HepG2 (cell line): ENCODE measurements at regions of chr10 and their contacts with region 1.

Region 1: DNA sequence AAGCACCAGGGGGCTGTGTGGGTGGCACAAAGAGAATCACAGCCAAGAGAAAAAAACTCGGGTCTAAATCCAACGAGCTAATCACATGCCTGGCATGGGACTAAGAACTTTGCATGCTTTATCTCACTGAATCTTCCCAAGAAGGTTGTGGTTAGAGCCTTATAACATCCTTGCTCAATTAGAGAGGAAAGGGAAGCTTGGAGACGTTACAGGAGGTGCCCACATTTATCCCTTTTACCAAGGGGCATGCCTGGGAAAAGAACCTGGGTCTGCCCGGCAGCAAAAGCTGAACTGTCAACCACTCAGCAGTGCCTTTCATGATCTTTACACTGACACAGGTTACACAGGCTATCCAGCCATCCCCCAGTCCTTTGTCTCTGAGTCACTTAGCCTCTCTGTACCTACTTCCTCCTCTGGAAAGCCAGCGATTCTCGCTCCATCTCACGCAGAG is 190.1 kb downstream of the PRPF18 start:
- DNase-seq: no peak
- ATAC-seq: no peak; the same call in 2 of the 3 replicates
- H3K4me3 ChIP-seq: no peak overlapping the region
- H3K27ac ChIP-seq: no peak overlapping the region
- H3K4me1 ChIP-seq: no peaks in the 10 kb centered on the region
- H3K27me3 ChIP-seq: no peaks in the 10 kb centered on the region
- CTCF ChIP-seq: no peak
- EP300 ChIP-seq: no peak
- POLR2A ChIP-seq: no peak
- RAD21 ChIP-seq: no peak

Region 2: DNA sequence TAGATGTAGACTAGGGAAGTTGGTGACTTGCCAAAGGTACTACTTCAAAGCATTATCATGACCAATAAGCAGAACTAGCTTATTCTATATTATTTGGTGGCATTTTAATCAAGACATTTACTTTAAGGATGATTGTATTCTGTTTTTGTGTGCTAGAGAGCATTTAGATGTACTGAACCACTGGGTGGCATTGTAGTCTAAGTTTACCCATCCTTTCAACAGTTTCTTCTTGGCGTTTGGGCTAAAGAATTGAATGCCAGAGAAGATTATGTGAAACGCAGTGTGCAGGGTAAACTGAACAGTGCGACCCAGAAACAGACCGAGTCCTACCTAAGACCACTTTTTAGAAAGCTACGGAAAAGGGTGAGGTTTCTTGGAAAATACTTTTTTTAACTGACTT is 163.4 kb before region 1 on chr10:
- CTCF ChIA-PET with region 1: no interaction called
- POLR2A ChIA-PET with region 1: no interaction called
- in situ Hi-C with region 1: no loop called
- intact Hi-C with region 1: loop called (anchors 1 kb)
- DNase-seq: no peak
- ATAC-seq: no peak
- H3K4me3 ChIP-seq: no peak overlapping the region
- H3K27ac ChIP-seq: no peak overlapping the region
- H3K4me1 ChIP-seq: no peaks in the 10 kb centered on the region
- H3K27me3 ChIP-seq: no peaks in the 10 kb centered on the region
- CTCF ChIP-seq: 0 out of 2 replicates have a peak, but pooled peaks have one; percentile 24
- EP300 ChIP-seq: no peak
- POLR2A ChIP-seq: no peak
- RAD21 ChIP-seq: no peak

Region 3: GRCh38 chr10:13659897-13660550 is 116.9 kb before region 1 on chr10:
- CTCF ChIA-PET with region 1: interaction called, 60 read pairs
- POLR2A ChIA-PET with region 1: no interaction called
- in situ Hi-C with region 1: loop called (anchors 5 kb)
- intact Hi-C with region 1: loop called (anchors 1 kb)
- DNase-seq: no peak
- ATAC-seq: peak; percentile 66
- H3K4me3 ChIP-seq: no peak overlapping the region
- H3K27ac ChIP-seq: no peak overlapping the region
- H3K4me1 ChIP-seq: no peaks in the 10 kb centered on the region
- H3K27me3 ChIP-seq: no peaks in the 10 kb centered on the region
- CTCF ChIP-seq: peak; percentile 92
- EP300 ChIP-seq: no peak
- POLR2A ChIP-seq: no peak
- RAD21 ChIP-seq: peak; percentile 81